ENCODE measurements at regions of chr12 and their contacts with region 1.

Region 1: GRCh38 chr12:47963340-47964040 is at the start of gene TMEM106C:
- DNase-seq: peak; percentile 88 to 94 (median 92)
- ATAC-seq: peak; percentile 99
- H3K4me3 ChIP-seq: peak within 1 kb of the TSS; percentile 90
- H3K4me3 Mint-ChIP-seq: peak within 1 kb of the TSS; percentile 92 to 100 (median 96)
- H3K27ac ChIP-seq: peak within 1 kb of the TSS; percentile 75
- H3K27ac Mint-ChIP-seq: peak within 1 kb of the TSS; percentile 86 to 94 (median 90)
- H3K4me1 ChIP-seq: peaks cover 7 to 13% of the 10 kb centered on the region in 2 donors
- H3K4me1 Mint-ChIP-seq: peaks cover 20 to 42% (median 34%) of the 10 kb centered on the region in 7 donors
- H3K27me3 ChIP-seq: no peaks in the 10 kb centered on the region
- H3K27me3 Mint-ChIP-seq: peaks cover 0 to 36% (median 6%) of the 10 kb centered on the region in 5 donors
- total RNA-seq, gene TMEM106C: 20.7 to 120 (median 34.4) TPM

Region 2: GRCh38 chr12:47870175-47870781 is 93.2 kb before region 1 on chr12:
- CTCF ChIA-PET with region 1: no interaction called
- POLR2A ChIA-PET with region 1: no interaction called
- intact Hi-C with region 1: loop called in 1 of 2 experiments (anchors 1 kb)
- DNase-seq: no peak
- ATAC-seq: peak; percentile 51
- H3K4me3 ChIP-seq: no peak overlapping the region
- H3K4me3 Mint-ChIP-seq: peak overlapping the region in 1 of 10 donors; percentile 49
- H3K27ac ChIP-seq: no peak overlapping the region
- H3K27ac Mint-ChIP-seq: peak overlapping the region in 1 of 9 donors; percentile 84
- H3K4me1 ChIP-seq: no peaks in the 10 kb centered on the region
- H3K4me1 Mint-ChIP-seq: peaks cover 0 to 85% (median 0%) of the 10 kb centered on the region in 7 donors
- H3K27me3 ChIP-seq: no peaks in the 10 kb centered on the region
- H3K27me3 Mint-ChIP-seq: no peaks in the 10 kb centered on the region

Region 3: DNA sequence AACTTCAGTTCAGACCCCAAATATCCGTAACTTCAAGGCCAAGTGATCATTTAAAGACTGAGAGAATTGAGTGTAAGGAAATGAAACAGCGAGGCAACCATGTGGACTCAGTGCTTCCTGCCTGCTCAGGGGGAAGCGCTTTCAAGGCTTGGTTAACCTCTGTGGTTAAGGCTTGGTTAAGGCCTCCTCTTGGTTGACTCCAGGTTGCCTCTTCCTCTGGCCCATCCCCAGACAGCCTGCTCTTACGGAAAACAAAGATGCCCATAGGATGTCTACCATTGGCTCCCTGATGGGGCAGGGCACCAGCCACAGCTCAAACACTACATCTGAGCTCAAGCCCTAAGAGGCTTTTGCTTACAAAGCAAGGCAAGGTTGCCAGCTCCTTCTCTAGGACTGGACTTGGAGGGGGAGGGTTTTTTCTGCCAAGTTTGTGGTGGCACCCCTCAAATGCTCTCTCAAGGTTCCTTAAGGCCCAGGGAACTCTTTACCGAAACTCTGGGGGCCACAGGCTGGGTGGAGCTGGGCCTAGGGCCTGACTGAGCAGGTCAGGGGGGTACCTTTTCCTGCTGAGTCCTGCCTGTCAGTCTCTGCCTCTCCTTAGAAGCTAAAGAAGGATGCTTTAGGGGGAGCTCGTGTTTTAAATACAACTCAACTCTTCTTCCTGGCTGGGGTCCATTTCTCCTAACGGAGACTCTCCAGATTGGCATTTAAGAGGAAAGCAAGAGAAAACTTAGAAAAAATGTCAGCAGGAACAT is 27.0 kb after region 1 on chr12:
- CTCF ChIA-PET with region 1: no interaction called
- POLR2A ChIA-PET with region 1: interaction called, 4 read pairs
- intact Hi-C with region 1: loop called in 1 of 2 experiments (anchors 1 kb)
- DNase-seq: peak in 8 of 9 donors; percentile 49 to 73 (median 64)
- ATAC-seq: peak; percentile 89
- H3K4me3 ChIP-seq: no peak overlapping the region
- H3K4me3 Mint-ChIP-seq: peak overlapping the region; percentile 44 to 72 (median 60)
- H3K27ac ChIP-seq: no peak overlapping the region
- H3K27ac Mint-ChIP-seq: peak overlapping the region in 5 of 9 donors; percentile 7 to 67 (median 36)
- H3K4me1 ChIP-seq: peaks cover 17 to 24% of the 10 kb centered on the region in 2 donors
- H3K4me1 Mint-ChIP-seq: peaks cover 19 to 30% (median 23%) of the 10 kb centered on the region in 7 donors
- H3K27me3 ChIP-seq: no peaks in the 10 kb centered on the region
- H3K27me3 Mint-ChIP-seq: peaks cover 8 to 82% (median 18%) of the 10 kb centered on the region in 5 donors

Region 4: GRCh38 chr12:48010366-48010970 is 47.0 kb after region 1 on chr12:
- CTCF ChIA-PET with region 1: no interaction called
- POLR2A ChIA-PET with region 1: no interaction called
- intact Hi-C with region 1: no loop called
- DNase-seq: no peak
- ATAC-seq: no peak
- H3K4me3 ChIP-seq: no peak overlapping the region
- H3K4me3 Mint-ChIP-seq: no peak overlapping the region
- H3K27ac ChIP-seq: no peak overlapping the region
- H3K27ac Mint-ChIP-seq: no peak overlapping the region
- H3K4me1 ChIP-seq: no peaks in the 10 kb centered on the region
- H3K4me1 Mint-ChIP-seq: peaks cover 0 to 6% (median 3%) of the 10 kb centered on the region in 7 donors
- H3K27me3 ChIP-seq: peaks cover 3 to 7% of the 10 kb centered on the region in 2 donors
- H3K27me3 Mint-ChIP-seq: peaks cover 53 to 85% (median 65%) of the 10 kb centered on the region in 5 donors

Region 5: GRCh38 chr12:48157018-48157888 is 193.8 kb after region 1 on chr12 and contains the start of gene ASB8:
- CTCF ChIA-PET with region 1: no interaction called
- POLR2A ChIA-PET with region 1: interaction called, 4 read pairs
- intact Hi-C with region 1: loop called (anchors 1 to 2 kb)
- DNase-seq: peak; percentile 95 to 99 (median 98)
- ATAC-seq: peak; percentile 98
- H3K4me3 ChIP-seq: peak within 1 kb of the TSS; percentile 97
- H3K4me3 Mint-ChIP-seq: peak within 1 kb of the TSS; percentile 90 to 99 (median 97)
- H3K27ac ChIP-seq: peak within 1 kb of the TSS; percentile 84
- H3K27ac Mint-ChIP-seq: peak within 1 kb of the TSS; percentile 95 to 99 (median 99)
- H3K4me1 ChIP-seq: peaks cover 8 to 20% of the 10 kb centered on the region in 2 donors
- H3K4me1 Mint-ChIP-seq: peaks cover 22 to 65% (median 56%) of the 10 kb centered on the region in 7 donors
- H3K27me3 ChIP-seq: no peaks in the 10 kb centered on the region
- H3K27me3 Mint-ChIP-seq: peaks cover 0 to 5% (median 0%) of the 10 kb centered on the region in 5 donors
- total RNA-seq, gene ASB8: 42.9 to 75.9 (median 54.9) TPM

Region 6: DNA sequence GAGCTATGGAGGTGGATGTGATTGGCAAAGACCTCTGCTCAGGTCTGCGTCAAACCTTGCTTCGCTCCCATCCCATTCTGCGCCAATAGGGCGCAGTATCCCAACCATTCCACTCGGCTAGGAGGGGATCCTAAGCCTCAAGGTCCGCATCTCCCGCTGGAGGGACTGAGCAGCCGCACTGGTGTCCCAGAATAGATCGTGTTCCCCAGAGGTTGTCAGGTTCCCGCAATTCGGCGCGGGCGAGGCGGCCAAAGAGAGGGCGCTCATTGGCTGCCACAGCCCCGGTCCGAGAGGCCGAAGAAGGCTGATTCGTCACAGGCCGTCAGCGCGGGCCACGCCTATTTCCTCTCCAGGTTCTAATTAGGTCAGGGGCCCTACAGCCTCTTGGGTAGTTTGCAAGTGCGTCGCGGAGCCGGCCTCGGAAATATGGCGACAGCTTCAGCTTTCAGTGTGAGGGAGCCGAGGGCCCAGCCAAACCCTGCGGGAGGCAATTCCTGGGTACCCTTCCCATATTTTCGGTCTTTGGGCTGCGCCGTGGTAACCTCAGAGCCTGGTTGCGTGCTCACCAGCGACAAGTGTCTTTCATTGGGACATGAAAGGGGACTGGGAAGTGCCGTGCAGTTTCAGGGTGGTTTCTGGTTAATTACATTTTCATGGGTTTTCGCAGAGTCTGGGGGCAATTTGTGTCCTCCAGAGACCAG is 234.6 kb after region 1 on chr12:
- CTCF ChIA-PET with region 1: interaction called, 4 read pairs
- POLR2A ChIA-PET with region 1: no interaction called
- intact Hi-C with region 1: loop called in 1 of 2 experiments (anchors 5 kb)
- DNase-seq: peak; percentile 75 to 88 (median 86)
- ATAC-seq: peak; percentile 97
- H3K4me3 ChIP-seq: peak overlapping the region; percentile 89
- H3K4me3 Mint-ChIP-seq: peak overlapping the region; percentile 83 to 96 (median 92)
- H3K27ac ChIP-seq: peak overlapping the region; percentile 98
- H3K27ac Mint-ChIP-seq: peak overlapping the region; percentile 94 to 99 (median 96)
- H3K4me1 ChIP-seq: peaks cover 28% of the 10 kb centered on the region in 2 donors
- H3K4me1 Mint-ChIP-seq: peaks cover 31 to 53% (median 48%) of the 10 kb centered on the region in 7 donors
- H3K27me3 ChIP-seq: no peaks in the 10 kb centered on the region
- H3K27me3 Mint-ChIP-seq: peaks cover 0 to 28% (median 0%) of the 10 kb centered on the region in 5 donors

Region 7: DNA sequence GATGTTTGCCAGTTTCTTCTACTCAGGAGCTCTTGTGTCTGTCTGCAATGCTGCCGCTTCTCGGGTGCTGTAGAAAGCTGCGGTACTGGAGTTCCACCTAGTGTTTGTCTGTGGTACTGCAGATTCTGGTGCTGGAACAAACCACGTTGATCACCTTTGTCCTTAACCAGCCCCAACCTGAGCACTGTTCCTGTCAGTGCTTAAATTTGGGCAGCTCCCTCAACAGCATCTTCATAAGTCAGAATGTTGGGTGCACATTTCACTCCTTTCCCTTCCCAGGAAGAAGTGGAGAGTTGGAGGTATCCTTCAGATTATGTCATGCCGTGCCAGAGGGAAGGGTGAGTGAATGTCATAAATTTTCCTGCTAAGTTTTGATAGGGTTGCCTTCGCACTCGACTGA is 655.1 kb after region 1 on chr12:
- CTCF ChIA-PET with region 1: interaction called, 3 read pairs
- POLR2A ChIA-PET with region 1: no interaction called
- intact Hi-C with region 1: loop called in 1 of 2 experiments (anchors 5 kb)
- DNase-seq: peak; percentile 27 to 82 (median 75)
- ATAC-seq: peak; percentile 97
- H3K4me3 ChIP-seq: no peak overlapping the region
- H3K4me3 Mint-ChIP-seq: no peak overlapping the region
- H3K27ac ChIP-seq: no peak overlapping the region
- H3K27ac Mint-ChIP-seq: no peak overlapping the region
- H3K4me1 ChIP-seq: no peaks in the 10 kb centered on the region
- H3K4me1 Mint-ChIP-seq: peaks cover 0 to 5% (median 0%) of the 10 kb centered on the region in 7 donors
- H3K27me3 ChIP-seq: no peaks in the 10 kb centered on the region
- H3K27me3 Mint-ChIP-seq: peaks cover 24 to 44% (median 29%) of the 10 kb centered on the region in 5 donors

Measured in naive thymus-derived CD4-positive, alpha-beta T cell (primary cell).